AG04449 (cell line): ENCODE measurements at regions of chr3 and their contacts with region 1.

Region 1: DNA sequence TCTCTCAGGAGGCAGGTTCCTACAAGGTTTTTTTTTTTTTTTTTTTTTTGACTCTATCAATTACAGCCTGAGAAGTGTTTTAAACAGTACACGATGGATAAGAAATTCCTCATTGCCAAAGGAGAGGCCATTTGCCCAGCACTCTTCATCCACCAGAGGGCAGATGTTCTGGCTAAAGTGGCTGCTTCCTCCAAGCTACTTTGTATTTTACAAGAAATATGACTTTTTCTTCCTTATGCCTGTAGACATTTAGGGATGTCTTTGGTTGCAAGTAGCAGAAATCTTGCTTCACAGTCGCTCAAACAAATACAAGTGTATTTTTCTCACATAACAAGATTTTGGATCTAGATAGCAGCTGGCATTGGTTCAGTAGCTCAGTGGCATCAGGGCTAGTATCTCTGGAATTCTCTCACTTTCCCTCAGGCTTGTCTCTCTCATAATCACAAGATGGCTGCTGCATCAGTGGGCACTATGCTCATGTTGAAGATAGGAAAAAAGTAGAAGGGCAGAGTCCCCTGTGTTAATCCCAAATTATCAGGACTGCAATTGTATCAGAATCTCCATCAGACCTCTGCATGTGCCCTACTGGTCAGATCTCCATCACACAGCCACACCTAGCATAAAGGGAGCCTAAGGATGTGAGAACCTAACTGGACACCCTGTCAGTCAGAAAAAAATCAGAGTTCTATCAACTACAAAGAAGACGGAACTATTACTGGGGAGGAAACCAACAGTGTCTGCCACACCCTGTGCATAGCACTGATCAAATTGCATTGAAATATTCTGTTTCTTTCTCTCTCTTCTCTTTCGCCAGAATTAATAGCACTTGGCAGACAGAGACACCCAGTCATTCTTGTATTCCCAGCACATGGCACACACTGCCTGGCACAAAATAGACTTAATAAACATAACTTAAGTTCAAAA is 138.9 kb upstream of the COL8A1 start:
- DNase-seq: no peak
- H3K4me3 ChIP-seq: no peak overlapping the region
- CTCF ChIP-seq: peak; percentile 74

Region 2: GRCh38 chr3:99351122-99351521 is 148.4 kb before region 1 on chr3:
- CTCF ChIA-PET with region 1: no interaction called
- POLR2A ChIA-PET with region 1: no interaction called
- DNase-seq: no peak
- H3K4me3 ChIP-seq: no peak overlapping the region
- CTCF ChIP-seq: no peak

Region 3: GRCh38 chr3:99484871-99485270 is 14.6 kb before region 1 on chr3:
- CTCF ChIA-PET with region 1: interaction called, 130 read pairs
- POLR2A ChIA-PET with region 1: interaction called, 3 read pairs
- DNase-seq: no peak
- H3K4me3 ChIP-seq: no peak overlapping the region
- CTCF ChIP-seq: no peak

Region 4: GRCh38 chr3:99532246-99532645 is 32.7 kb after region 1 on chr3:
- CTCF ChIA-PET with region 1: interaction called, 14 read pairs
- POLR2A ChIA-PET with region 1: no interaction called
- DNase-seq: no peak
- H3K4me3 ChIP-seq: no peak overlapping the region
- CTCF ChIP-seq: peak; percentile 64

Region 5: GRCh38 chr3:99638167-99638948 is 138.9 kb after region 1 on chr3 and contains the start of gene COL8A1:
- CTCF ChIA-PET with region 1: interaction called, 11 read pairs
- POLR2A ChIA-PET with region 1: interaction called, 3 read pairs
- DNase-seq: no peak
- H3K4me3 ChIP-seq: peak within 1 kb of the TSS; percentile 84
- CTCF ChIP-seq: no peak